ENCODE measurements at regions of chr6 and their contacts with region 1.

Region 1: GRCh38 chr6:26216356-26216885 is 129.2 kb downstream of the HFE start:
- DNase-seq: no peak
- ATAC-seq: peak; percentile 80
- H3K4me3 ChIP-seq: peak overlapping the region; percentile 44
- H3K27ac ChIP-seq: peak overlapping the region; percentile 87
- H3K4me1 ChIP-seq: no peaks in the 10 kb centered on the region
- H3K27me3 ChIP-seq: peaks cover 52% of the 10 kb centered on the region
- CTCF ChIP-seq: no peak

Region 2: DNA sequence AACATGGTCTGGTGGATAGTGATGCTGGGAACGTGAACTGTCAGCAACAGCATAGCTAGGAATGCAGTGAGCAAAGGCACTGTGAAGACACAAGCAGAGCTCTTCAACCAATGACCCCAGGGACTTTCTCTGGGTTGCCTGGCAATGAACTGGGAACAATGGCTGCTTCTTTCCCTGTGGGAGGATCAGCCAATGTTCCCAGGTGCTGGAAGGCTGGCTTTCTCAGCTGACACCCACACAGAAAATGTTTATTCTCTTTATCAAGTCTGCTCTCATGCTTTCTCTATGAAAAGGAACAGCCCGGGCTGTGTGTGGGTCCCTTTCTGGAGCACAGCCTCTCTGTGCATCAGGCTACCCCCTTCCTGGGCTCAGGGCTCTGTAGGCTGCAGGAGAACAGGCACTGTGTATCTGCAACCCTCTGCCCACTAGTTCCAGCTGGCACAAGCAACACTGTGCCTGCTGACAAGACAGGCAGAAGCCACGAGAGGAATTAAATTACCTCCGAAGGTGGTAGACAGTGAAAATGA is 75.0 kb before region 1 on chr6:
- intact Hi-C with region 1: no loop called
- DNase-seq: no peak
- ATAC-seq: no peak
- H3K4me3 ChIP-seq: no peak overlapping the region
- H3K27ac ChIP-seq: no peak overlapping the region
- H3K4me1 ChIP-seq: no peaks in the 10 kb centered on the region
- H3K27me3 ChIP-seq: no peaks in the 10 kb centered on the region
- CTCF ChIP-seq: no peak

Region 3: DNA sequence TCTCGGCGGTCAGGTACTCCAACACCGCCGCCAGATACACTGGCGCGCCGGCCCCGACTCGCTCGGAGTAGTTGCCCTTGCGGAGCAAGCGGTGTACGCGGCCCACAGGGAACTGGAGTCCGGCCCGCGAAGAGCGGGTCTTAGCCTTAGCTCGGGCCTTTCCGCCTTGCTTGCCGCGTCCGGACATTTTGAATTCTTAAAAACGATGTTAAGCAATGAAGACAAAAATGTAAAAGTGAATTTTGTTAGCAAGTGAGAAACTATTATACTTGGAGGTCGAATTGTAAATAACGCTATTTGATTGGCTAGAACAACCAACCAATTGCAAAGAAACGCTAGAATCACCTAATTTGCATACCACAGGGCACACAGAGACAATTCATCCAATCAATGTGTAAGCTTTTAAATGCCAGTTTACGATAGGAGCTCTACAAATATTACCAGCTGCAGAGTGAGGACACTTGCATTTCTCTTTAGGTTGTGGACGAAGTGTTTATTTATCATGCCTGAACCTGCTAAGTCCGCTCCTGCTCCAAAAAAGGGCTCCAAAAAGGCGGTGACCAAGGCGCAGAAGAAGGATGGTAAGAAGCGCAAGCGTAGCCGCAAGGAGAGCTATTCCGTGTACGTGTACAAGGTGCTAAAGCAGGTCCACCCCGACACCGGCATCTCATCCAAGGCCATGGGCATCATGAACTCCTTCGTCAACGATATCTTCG is 17.2 kb before region 1 on chr6:
- intact Hi-C with region 1: loop called (anchors 2 kb)
- DNase-seq: peak; percentile 81
- ATAC-seq: peak; percentile 83
- H3K4me3 ChIP-seq: peak overlapping the region; percentile 69
- H3K27ac ChIP-seq: peak overlapping the region; percentile 97
- H3K4me1 ChIP-seq: peaks cover 6% of the 10 kb centered on the region
- H3K27me3 ChIP-seq: peaks cover 46% of the 10 kb centered on the region
- CTCF ChIP-seq: no peak

Measured in upper lobe of right lung (tissue), 1 donor.